Posterior vena cava (tissue), 2 donors: ENCODE measurements at regions of chr6 and their contacts with region 1.

Region 1: DNA sequence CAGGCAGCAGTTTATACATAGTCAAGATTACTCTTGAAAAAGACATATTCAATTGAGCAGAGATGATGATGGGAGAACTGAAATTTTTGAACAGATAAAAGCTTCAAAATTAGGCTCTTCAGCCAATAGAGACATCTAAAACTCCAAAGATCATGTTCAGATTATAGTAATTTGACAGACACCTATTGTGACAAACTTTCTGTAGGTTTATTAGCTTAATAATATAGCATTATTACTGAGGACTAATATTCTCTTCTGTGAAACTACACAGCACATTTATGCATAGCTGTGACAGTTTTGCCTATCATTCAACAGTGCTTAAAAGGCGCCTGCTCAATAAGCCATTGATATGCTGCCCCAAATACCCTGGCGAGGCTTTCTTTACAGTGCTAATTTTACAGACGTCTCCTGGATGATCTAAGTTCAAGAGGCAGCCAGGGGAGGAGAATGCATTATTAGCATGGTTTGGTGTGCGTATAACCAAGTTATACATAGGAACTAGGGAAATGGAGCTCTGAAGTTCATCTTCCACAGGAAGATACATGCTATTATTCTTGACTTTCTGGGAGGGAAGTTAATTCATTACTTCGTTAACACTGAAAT is 21.5 kb downstream of the PLAGL1 start:
- DNase-seq: no peak

Region 2: GRCh38 chr6:143928853-143929252 is 57.7 kb before region 1 on chr6:
- intact Hi-C with region 1: loop called in 1 of 2 experiments (anchors 2 kb)
- DNase-seq: no peak

Region 3: GRCh38 chr6:144036835-144037195 is 50.3 kb after region 1 on chr6:
- intact Hi-C with region 1: no loop called
- DNase-seq: no peak

Region 4: DNA sequence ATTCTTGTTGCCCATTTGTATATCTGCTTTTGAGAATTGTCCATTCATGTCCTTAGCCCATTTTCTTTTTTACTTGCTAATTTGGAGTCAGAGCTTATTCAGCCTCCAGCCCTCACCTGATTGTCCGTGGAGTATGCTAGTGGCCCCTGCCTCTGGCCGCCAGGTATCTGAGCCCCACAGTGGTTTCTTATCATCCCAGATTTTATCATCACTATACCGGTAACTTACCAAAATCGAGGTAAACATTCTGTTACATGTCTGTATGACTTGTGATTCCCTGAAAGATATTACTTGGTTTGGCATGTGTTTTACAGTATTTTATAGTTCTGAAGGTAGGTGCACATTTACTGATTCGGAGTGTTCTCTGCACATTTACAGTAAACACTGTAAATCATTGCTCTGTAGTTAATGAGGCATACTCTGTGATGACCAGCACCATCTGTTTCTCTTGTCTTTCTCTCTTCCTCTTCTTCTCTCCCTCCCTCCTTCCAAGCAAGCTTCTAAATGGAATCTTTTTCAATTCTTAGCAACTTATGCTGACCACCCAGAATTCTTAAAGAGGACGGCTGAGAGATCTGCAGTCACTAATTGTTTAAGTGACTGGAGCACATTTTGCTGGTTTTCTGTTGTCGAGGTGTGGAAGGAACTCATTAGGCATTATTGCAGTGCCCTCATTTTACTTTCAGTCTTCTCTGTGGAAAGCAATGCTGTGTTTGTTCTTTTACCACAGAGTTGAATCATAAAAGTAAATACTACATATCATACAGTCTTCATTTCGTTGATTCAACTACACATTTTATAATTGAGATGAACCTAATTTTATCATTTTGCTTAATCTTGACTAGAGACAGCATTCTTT is 425.0 kb after region 1 on chr6:
- intact Hi-C with region 1: no loop called
- DNase-seq: no peak